Tibial artery (tissue), 4 donors: ENCODE measurements at regions of chr16 and their contacts with region 1.

Region 1: DNA sequence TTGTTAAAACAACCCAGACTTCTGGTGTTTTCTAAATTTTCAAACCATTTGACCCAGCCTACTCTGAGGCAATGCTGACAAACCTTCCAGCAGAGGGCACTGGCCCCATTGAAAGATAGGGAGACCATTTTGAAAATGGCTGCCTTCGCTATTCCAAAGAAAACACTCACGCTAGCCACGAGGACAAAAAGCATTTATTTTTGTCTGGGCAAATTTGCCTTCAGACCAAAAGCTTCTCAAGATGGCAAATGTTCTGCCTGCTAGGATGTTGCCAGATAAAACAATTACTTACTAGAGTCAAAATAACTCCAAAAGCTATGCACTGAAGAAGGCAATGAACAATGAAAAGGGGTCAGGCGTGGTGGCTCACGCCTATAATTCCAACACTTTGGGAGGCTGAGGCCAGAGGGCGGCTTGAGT is 296.7 kb upstream of the IRX5 start:
- DNase-seq: peak; percentile 67 to 85
- H3K4me3 ChIP-seq: no peak overlapping the region
- H3K27ac ChIP-seq: peak overlapping the region; percentile 15 to 59
- H3K4me1 ChIP-seq: peaks cover 0 to 12% (median 2%) of the 10 kb centered on the region in 4 donors
- H3K27me3 ChIP-seq: no peaks in the 10 kb centered on the region
- CTCF ChIP-seq: peak; percentile 74 to 82

Region 2: DNA sequence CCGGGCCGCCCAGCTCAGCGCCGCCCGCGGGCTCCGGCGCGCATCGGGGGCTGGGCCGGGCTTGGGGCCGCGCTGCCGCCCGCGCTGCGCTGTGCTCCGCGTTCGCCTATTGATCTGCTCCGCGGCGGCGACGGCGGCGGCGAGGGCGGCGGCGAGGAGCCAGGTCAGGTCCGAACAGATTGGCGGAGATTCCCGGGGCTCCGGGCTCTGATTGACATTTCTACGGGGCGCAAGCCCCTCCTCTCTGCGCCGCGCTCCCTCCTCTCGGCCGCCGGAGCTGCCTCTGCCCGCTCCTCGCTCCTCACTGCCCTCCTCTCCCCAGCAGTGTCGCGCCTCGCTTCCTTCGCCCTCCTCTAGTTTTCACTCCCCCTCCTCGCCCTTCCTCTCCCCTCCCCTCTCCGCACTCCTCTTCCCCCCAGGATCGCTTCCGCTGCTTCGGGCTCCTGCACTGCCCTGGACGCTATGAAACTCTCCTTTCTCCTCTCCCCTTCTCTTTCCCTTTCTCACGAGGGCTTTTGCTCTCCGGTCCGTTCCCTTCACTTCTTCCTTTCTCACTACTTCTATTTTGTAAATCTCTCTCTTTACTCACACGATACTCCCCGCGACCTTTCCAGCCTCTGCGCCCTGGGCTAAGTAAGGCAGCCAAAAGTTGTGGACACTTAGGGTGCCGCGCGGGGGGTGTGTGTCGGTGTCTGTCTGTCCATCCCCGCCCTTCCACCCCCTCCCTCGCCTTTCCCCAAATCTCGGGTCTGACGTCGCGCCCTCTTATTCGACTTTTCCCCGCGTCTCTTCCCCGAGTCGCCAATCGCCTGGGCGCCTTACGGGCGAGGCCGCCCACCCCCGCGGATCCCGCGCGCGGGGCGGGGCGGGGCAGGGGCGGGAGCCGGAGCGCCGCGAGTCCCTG is 347.6 kb before region 1 on chr16 and contains the start of gene IRX3:
- intact Hi-C with region 1: loop called (anchors 10 kb)
- DNase-seq: peak; percentile 87 to 93
- H3K4me3 ChIP-seq: peak within 1 kb of the TSS; percentile 66 to 91
- H3K27ac ChIP-seq: peak within 1 kb of the TSS; percentile 77 to 91
- H3K4me1 ChIP-seq: peaks cover 0 to 48% (median 34%) of the 10 kb centered on the region in 4 donors
- H3K27me3 ChIP-seq: peaks cover 0 to 16% of the 10 kb centered on the region in 2 donors
- CTCF ChIP-seq: no peak

Region 3: DNA sequence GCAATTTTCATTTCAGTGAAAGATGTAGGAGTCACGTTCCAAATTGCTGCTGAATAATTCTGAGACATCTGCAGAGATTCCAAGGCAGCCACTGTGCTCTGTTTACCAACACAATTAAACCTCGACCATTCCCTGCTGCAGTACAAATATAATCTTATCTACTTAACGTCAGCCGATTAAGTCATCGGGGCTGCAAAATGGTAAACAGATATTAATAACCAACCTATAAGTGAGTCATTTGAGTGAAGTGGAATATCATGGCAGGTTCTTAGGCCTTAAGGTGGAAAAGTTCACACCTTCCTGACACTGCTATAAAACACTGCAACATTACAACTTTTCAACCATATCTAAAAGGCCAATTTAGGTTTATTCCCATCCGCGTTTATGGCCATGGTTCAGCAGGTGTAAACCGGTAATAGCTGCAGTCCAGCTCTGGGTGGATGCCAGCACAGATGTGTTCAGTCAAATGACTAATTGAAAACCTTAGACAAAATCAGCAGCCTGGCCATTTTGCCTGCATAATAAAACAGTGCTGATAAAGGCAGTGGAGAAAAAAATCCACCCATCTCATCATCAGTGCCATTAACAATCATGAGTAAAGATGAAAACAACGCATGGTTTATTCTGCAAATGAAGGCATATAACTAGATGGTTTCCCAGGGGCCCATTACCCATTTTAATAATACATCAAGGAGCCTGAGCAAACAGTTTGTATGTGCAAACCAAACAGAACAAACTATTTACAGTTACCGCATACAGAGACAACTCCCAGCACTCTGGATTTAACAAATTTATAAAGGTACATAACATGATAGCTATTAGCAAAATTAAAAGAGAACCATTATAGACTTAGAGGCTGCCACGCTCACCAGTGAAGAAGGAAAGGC is 144.5 kb before region 1 on chr16:
- intact Hi-C with region 1: no loop called
- DNase-seq: no peak
- H3K4me3 ChIP-seq: no peak overlapping the region
- H3K27ac ChIP-seq: no peak overlapping the region
- H3K4me1 ChIP-seq: peaks cover 0 to 24% (median 13%) of the 10 kb centered on the region in 4 donors
- H3K27me3 ChIP-seq: no peaks in the 10 kb centered on the region
- CTCF ChIP-seq: no peak

Region 4: GRCh38 chr16:54554581-54554980 is 79.4 kb before region 1 on chr16:
- intact Hi-C with region 1: no loop called
- DNase-seq: no peak
- H3K4me3 ChIP-seq: no peak overlapping the region
- H3K27ac ChIP-seq: no peak overlapping the region
- H3K4me1 ChIP-seq: no peaks in the 10 kb centered on the region
- H3K27me3 ChIP-seq: no peaks in the 10 kb centered on the region
- CTCF ChIP-seq: no peak

Region 5: DNA sequence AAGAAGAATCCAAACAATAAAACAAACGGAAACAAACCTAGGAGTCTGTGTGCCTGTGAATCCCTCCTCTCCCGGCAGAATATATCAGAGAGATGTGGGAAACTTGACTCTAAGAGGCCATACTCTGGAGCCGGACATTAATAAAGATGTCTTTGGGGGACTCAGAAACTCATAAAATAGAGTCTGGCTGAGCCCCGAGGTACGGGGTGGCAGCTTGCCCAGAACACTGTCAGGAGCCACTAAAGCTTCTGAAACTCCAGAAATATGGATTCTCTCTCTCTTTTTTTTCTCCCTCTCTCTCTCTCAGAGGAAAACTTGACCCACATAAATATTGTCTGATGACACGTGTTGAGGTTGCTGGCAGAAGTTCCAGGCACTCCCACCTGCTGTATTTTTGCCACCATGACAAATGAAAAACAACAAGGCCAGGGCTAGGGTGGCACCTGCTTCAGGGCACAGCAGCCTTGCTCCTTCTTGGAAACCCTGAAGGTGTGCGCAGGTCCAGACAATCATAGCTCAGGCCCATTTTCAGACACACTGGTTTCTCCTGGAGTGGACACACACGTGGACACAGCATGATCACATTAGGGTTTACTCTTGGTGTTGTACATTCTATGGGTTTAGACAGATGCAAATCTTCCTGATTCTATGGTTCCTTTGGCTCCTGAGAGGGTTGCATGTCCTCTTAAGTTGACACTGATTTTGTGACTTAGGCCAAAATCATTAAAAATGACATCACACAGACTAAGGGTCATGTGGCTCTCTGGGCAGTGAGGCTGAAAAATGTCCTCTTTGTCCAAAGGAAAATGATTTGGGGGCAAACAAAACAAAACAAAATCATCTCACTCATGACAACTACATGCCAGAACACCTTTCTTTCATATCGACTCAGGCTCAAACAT is 64.8 kb before region 1 on chr16:
- intact Hi-C with region 1: no loop called
- DNase-seq: no peak
- H3K4me3 ChIP-seq: no peak overlapping the region
- H3K27ac ChIP-seq: no peak overlapping the region
- H3K4me1 ChIP-seq: peaks cover 0 to 6% (median 0%) of the 10 kb centered on the region in 4 donors
- H3K27me3 ChIP-seq: no peaks in the 10 kb centered on the region
- CTCF ChIP-seq: no peak

Region 6: GRCh38 chr16:54657058-54657708 is 23.2 kb after region 1 on chr16:
- intact Hi-C with region 1: loop called (anchors 1 kb)
- DNase-seq: peak; percentile 25 to 76
- H3K4me3 ChIP-seq: peak overlapping the region in 1 of 2 donors; percentile 26
- H3K27ac ChIP-seq: peak overlapping the region; percentile 0 to 56
- H3K4me1 ChIP-seq: peaks cover 0 to 46% (median 39%) of the 10 kb centered on the region in 4 donors
- H3K27me3 ChIP-seq: no peaks in the 10 kb centered on the region
- CTCF ChIP-seq: no peak

Region 7: DNA sequence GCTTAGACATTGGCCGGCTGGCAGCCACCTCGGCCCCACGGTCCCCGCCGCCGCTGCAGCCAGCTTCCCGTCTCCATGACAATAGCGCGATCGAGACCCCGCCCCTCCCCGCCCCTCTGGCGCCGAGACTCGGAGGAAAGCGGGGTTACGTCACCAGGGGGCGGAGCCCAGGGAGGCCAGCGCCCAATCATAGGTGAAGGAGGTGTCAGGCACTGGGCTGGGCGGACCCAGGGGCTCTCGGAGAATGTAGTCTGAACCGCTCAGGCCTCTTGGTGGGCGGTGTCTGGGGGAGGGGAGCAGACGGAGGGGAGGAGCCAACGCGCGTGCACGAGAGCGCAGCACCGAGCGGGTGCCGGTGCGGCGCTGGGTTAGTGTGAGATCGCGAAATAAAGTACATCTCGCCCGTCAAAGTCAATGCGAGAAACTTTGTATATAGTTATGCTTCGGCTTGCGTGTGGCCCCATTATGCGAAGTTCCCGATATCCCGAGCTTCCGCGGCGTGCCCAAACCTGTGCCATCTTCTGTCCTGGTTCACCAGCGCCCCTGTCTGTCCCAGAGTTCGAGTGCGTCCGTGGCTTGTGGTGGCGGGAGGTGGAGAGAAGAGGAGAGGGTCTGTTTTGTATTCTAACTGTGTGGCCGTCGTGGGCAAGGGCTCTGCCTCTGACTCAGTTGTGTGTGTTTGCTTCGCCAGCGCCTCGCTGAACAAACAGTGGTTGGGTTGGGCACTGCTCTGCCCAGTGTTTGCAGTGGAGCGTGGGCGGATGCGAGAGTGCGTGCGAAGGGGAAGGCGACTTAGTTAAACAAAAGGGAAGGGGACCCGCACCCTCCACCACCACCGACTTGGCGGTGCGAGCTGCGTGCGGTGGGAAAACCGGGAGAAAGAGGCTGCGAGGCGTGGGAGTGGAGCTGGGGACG is 295.4 kb after region 1 on chr16:
- intact Hi-C with region 1: loop called (anchors 5 kb)
- DNase-seq: peak; percentile 99 to 100
- H3K4me3 ChIP-seq: peak overlapping the region; percentile 69 to 80
- H3K27ac ChIP-seq: peak overlapping the region; percentile 94 to 96
- H3K4me1 ChIP-seq: peaks cover 0 to 53% (median 19%) of the 10 kb centered on the region in 4 donors
- H3K27me3 ChIP-seq: no peaks in the 10 kb centered on the region
- CTCF ChIP-seq: no peak

Region 8: DNA sequence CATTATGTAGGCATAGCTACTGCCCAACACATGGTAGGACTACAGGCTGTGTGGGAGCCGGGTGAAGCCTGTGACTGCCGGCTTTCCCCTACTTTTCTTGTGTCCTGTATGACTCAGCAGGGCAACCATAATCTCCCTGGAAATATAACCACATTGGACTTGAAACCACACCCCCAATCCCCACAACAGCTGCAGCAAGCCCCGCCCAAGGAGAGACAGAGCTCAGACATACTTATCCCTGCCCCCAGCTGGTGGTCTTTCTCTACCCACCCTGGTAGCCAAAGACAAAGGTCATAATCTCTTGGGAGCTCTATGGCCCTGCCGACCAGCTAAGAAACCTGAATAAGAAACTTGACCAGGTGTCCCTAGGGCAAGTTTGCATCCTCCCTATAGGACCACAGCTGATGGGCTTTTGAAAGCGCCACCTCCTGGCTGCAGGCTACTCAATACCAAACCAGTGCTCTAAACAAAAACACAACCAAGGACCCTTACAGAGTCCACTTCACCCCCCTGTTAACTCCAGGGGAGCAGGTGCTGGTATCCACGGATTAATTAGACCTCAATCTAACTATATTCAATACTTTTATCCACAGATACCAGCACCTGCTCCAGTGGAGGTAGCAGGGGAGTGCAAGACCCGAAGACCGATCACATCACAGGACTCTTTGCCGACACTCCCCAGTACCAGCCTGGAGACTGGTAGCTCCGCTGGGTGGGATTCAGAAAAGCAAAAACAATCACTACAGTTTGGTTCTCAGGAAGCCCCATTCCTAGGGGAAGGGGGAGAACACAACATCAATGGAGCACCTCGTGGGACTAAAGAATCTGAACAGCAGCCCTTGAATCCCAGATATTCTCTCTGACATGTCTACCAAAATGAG is 387.9 kb after region 1 on chr16:
- intact Hi-C with region 1: no loop called
- DNase-seq: peak in 1 of 2 donors; percentile 28
- H3K4me3 ChIP-seq: no peak overlapping the region
- H3K27ac ChIP-seq: no peak overlapping the region
- H3K4me1 ChIP-seq: no peaks in the 10 kb centered on the region
- H3K27me3 ChIP-seq: no peaks in the 10 kb centered on the region
- CTCF ChIP-seq: no peak

Region 9: DNA sequence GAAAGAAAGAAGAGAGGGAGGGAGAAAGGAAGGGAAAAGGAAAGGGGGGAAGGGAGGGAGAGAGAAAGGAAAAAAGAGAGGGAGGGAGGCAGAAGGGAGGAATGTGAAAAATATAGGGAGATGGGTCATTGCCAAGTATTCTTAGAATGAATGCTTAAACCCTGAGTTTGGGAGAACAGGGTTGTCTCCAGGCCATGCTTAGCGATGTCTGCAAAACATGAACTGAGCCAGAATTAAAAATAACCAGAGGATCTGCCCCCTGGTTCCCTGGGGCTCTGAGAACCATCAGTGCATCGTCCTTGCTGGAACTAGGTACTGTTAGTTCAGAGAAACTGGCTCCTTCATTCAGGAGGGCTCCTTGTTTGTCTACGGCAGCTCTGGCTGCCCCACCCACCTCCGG is 467.1 kb after region 1 on chr16:
- intact Hi-C with region 1: loop called (anchors 10 kb)
- DNase-seq: no peak
- H3K4me3 ChIP-seq: no peak overlapping the region
- H3K27ac ChIP-seq: peak overlapping the region; percentile 10 to 26
- H3K4me1 ChIP-seq: peaks cover 0 to 25% (median 14%) of the 10 kb centered on the region in 4 donors
- H3K27me3 ChIP-seq: no peaks in the 10 kb centered on the region
- CTCF ChIP-seq: no peak

Region 10: GRCh38 chr16:55370762-55371482 is 737.0 kb after region 1 on chr16:
- intact Hi-C with region 1: loop called (anchors 10 kb)
- DNase-seq: peak; percentile 79 to 81
- H3K4me3 ChIP-seq: peak overlapping the region in 1 of 2 donors; percentile 11
- H3K27ac ChIP-seq: peak overlapping the region in 1 of 2 donors; percentile 1
- H3K4me1 ChIP-seq: peaks cover 0 to 59% (median 24%) of the 10 kb centered on the region in 4 donors
- H3K27me3 ChIP-seq: no peaks in the 10 kb centered on the region
- CTCF ChIP-seq: peak; percentile 40 to 50